ENCODE measurements at regions of chr5 and their contacts with region 1.

Region 1: DNA sequence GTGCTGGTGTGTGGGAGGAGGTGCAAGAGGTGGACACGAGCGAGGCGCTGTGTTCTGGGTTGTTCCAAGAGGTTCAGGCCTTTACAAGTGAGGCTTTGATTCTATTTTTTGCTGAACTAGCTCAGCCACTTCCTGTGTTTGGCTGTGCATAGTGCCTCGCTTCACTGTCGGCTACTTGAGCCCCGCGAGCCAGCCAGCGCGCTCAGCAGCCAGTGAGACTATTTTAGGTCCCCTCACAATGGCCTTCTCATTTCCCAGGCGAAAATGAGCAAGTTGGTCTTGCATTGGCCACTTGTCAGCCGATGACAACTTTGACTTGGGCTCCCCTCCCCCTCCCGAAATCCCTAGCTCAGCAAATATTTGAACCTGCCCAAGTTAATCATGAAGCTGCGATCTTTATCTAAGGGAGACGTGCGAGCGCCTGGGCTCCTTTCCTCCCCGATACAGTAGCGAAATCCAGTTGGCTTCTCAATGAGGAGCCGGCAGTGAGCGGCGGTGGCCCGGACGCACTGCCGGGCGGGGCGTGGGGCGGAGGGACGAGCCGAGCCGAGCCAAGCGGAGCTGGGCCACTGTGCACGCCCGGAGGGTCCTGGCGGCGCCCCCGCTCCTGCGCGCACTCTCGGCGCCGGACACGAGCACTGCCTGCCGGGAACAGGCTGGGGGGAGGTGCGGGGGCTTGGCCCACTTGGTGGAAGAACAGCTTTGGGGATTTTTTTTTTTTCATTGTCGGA is 72.6 kb downstream of the PIK3R1 start:
- DNase-seq: peak; percentile 66 to 72
- H3K4me3 ChIP-seq: peak overlapping the region; percentile 47 to 55
- H3K27ac ChIP-seq: peak overlapping the region; percentile 93 to 95
- H3K4me1 ChIP-seq: peaks cover 0 to 15% of the 10 kb centered on the region in 2 donors
- H3K27me3 ChIP-seq: no peaks in the 10 kb centered on the region
- CTCF ChIP-seq: no peak
- POLR2A ChIP-seq: peak in 1 of 2 donors; percentile 33

Region 2: DNA sequence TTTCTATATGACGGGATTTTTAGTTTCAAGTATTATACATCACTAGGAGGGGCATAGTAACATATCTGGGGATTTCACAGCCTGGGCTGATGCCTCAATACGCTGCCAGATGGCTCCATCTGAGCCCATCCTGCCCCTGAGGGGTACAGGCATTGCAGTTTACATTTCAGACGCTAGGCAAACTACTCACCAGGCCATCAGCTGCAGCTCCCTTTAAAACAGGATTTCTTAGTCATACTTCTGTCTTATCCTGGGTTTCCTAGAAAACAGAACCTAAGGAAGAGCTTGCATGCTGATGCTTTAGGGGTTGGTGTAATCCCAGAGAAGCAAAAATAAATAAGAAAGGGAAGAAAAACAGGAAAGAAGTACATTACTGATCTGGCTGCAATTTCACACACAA is 445.3 kb before region 1 on chr5:
- intact Hi-C with region 1: no loop called
- DNase-seq: no peak
- H3K4me3 ChIP-seq: no peak overlapping the region
- H3K27ac ChIP-seq: no peak overlapping the region
- H3K4me1 ChIP-seq: no peaks in the 10 kb centered on the region
- H3K27me3 ChIP-seq: peaks cover 0 to 4% of the 10 kb centered on the region in 2 donors
- CTCF ChIP-seq: no peak
- POLR2A ChIP-seq: no peak

Region 3: DNA sequence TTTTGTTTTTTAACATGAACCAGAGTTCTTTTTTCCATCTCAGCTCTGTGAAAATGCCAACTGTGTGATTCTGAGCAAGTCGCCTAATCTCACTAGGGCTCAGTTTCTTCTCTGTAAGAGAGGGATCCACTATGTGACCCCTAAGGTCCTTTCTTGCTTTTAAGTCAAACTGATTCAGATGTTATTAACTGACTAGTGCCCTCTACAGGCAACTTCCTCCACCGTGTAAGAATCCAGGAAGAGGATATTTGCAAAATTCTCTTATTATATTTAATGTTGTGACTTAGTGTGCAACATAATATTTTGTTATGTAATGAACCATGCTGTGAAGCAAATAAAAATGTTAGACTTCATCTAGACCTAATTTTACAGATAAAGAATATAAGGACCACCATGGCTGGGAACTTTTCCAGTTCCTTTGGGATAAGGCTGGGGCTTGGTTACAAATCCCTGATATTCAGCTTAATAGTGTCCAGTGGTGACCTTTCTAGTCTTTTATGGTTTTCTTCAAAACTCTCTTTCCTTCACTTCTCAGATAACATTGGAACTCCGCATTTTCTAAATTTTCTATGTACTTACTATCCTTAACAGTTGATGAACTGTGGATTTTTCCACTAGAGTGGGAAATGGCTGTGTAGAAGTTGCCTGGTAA is 172.1 kb after region 1 on chr5:
- intact Hi-C with region 1: loop called (anchors 10 kb)
- DNase-seq: peak in 1 of 2 donors; percentile 46
- H3K4me3 ChIP-seq: no peak overlapping the region
- H3K27ac ChIP-seq: peak overlapping the region; percentile 8 to 12
- H3K4me1 ChIP-seq: no peaks in the 10 kb centered on the region
- H3K27me3 ChIP-seq: no peaks in the 10 kb centered on the region
- CTCF ChIP-seq: peak; percentile 51 to 58 (median 55)
- POLR2A ChIP-seq: no peak

Region 4: DNA sequence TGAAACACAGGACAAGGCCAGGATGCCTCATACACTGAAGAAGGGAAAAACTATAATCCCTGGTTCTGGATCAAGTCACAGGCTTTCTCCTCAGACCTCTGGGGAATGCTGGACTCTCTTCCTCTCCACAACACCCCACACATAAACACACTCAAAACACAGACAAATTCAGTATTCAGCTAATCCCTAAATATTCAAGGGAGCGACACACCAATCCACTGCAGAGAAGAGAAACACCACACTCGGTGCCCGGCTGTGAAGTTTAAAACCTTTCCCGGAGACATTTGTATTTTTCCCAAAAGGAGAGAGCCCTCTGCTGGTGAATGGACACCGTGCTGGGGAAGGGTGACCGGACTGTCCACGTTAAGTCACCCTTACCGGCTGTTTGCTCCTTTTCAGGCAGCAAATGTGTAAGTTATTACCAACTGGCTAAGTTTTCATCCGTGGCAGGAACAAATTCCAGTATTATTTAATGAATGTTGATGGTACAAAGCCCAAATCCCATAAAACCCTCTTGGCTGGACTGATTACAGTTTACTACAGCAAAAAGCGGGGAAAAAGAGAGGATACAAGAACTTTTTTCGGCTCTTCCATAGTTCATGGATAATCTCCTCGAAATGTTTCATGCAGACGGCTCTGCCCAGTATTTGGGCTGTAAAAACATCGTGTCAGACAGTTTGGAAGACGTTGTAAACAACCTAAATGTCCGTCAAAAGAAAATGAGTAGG is 674.8 kb after region 1 on chr5:
- intact Hi-C with region 1: loop called (anchors 5 kb)
- DNase-seq: peak; percentile 79 to 86
- H3K4me3 ChIP-seq: no peak overlapping the region
- H3K27ac ChIP-seq: peak overlapping the region; percentile 80 to 90
- H3K4me1 ChIP-seq: peaks cover 0 to 6% of the 10 kb centered on the region in 2 donors
- H3K27me3 ChIP-seq: no peaks in the 10 kb centered on the region
- CTCF ChIP-seq: peak; percentile 61 to 84 (median 81)
- POLR2A ChIP-seq: no peak